ENCODE measurements at regions of chr12 and their contacts with region 1.

Region 1: DNA sequence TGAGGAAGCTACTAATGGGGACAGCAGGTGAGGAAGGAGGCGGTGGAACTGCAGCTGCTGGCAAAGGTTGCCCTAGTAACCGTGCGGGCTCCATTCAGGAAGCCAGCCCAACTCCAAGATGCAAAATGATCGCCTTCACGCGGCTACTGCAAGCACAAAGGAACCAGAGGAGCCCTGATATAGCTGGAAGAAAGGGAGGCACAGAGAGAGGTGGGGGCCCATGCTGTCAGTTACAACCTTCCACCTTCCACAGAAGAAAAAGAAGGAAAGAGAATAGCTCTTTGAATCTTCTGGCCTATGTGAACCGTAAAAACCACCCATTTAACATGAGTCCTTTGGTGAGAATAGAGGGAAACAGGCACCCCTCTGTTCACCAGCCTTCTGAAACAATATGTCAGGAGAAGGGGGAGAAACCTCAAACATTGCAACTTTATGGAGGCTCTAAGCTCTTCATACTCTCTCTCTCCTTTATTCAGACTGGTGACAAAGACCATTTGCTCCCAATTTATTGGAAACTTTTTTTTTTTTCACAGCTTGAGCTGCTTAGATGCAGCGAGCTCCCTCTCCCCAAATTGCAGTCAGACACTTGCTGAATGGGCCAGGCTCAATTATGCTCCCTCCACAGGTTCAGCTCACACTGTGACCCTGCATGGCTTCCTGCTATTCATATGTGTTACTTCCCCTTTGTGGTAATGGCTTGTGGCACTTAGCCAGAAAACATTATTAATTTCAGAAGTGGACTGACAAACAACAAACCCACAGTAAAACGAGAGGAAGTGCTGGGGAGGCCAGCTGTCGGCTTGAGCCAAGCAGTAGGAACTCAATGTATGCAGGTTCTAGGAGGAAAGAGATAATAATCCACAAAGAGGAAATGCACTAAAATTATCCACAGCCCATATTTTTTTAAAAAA is 6.2 kb downstream of the DUSP6 start:
- DNase-seq: peak; percentile 48 to 74
- ATAC-seq: peak; percentile 77 to 92 (median 90)
- H3K4me3 ChIP-seq: peak overlapping the region; percentile 15
- H3K4me3 Mint-ChIP-seq: peak overlapping the region; percentile 98
- H3K27ac ChIP-seq: peak overlapping the region; percentile 23
- H3K27ac Mint-ChIP-seq: peak overlapping the region; percentile 85
- H3K4me1 ChIP-seq: peaks cover 42% of the 10 kb centered on the region
- H3K4me1 Mint-ChIP-seq: peaks cover 82 to 91% of the 10 kb centered on the region in 2 donors
- H3K27me3 ChIP-seq: no peaks in the 10 kb centered on the region
- H3K27me3 Mint-ChIP-seq: no peaks in the 10 kb centered on the region
- CTCF ChIP-seq: no peak

Region 2: DNA sequence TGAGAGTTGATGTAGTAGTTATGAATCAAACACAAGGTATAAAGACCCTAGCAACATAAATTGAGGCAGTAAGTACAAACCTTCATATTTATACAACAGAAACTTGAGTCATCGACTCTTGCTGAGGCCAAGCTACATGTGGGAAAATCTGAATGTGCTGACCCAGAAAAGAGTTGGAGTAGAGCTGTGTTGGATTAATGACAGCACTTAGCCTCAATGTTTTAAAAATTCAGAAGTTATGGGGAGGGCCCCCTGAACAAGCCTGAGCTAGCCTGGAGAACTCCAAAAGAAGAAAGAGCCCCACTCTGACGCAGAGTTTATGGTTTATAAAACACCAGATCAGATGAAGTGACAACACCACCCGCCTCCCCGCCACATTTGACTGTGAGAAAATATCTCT is 93.8 kb before region 1 on chr12:
- intact Hi-C with region 1: loop called (anchors 2 kb)
- DNase-seq: peak in 1 of 2 donors; percentile 38
- ATAC-seq: peak; percentile 71 to 88 (median 79)
- H3K4me3 ChIP-seq: no peak overlapping the region
- H3K4me3 Mint-ChIP-seq: peak overlapping the region; percentile 53
- H3K27ac ChIP-seq: no peak overlapping the region
- H3K27ac Mint-ChIP-seq: peak overlapping the region; percentile 77 to 86
- H3K4me1 ChIP-seq: no peaks in the 10 kb centered on the region
- H3K4me1 Mint-ChIP-seq: peaks cover 36 to 49% of the 10 kb centered on the region in 2 donors
- H3K27me3 ChIP-seq: no peaks in the 10 kb centered on the region
- H3K27me3 Mint-ChIP-seq: peaks cover 0 to 3% of the 10 kb centered on the region in 2 donors
- CTCF ChIP-seq: no peak

Region 3: DNA sequence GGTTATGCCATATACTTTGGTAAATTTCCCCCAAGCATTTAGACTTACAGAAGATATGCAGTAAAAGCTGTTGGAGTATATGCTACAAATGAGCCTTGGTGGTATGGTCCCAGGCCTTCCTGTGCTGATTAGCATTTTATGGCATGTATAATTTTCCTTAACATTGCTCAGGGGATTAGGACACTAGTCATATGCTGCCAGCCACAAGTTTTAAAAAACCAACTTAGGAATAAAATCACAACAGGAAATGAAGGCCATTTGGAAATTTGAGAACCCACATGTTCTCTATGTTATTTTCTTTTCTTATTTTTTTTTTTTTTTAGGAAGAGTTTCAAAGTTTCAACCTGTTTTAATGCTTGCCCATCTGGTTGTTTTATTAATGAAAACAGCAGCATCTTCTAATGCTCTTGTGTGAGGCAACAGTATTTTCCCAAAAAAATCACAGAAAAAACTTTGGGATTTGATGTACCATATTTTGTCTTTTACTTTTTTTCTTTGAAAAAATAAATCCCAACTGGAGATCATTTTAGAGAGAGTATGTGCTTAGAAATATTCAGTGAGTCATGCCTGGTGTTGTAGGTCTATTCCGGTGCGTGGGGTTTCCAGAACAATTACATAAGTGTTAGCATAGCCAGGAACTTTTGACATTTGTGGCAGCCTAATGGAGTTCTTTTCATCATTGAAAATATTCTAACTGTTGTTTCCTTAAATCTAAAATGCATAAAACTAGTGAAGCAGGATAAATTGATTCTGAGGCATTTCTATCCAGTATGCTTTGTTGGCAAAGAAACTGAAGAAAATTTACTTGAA is 27.9 kb after region 1 on chr12:
- intact Hi-C with region 1: loop called (anchors 1 kb)
- DNase-seq: no peak
- ATAC-seq: no peak
- H3K4me3 ChIP-seq: no peak overlapping the region
- H3K4me3 Mint-ChIP-seq: no peak overlapping the region
- H3K27ac ChIP-seq: no peak overlapping the region
- H3K27ac Mint-ChIP-seq: no peak overlapping the region
- H3K4me1 ChIP-seq: peaks cover 11% of the 10 kb centered on the region
- H3K4me1 Mint-ChIP-seq: peaks cover 24 to 27% of the 10 kb centered on the region in 2 donors
- H3K27me3 ChIP-seq: no peaks in the 10 kb centered on the region
- H3K27me3 Mint-ChIP-seq: no peaks in the 10 kb centered on the region
- CTCF ChIP-seq: no peak

Measured in natural killer cell (primary cell).